ENCODE measurements at regions of chrX and their contacts with region 1.

Region 1: DNA sequence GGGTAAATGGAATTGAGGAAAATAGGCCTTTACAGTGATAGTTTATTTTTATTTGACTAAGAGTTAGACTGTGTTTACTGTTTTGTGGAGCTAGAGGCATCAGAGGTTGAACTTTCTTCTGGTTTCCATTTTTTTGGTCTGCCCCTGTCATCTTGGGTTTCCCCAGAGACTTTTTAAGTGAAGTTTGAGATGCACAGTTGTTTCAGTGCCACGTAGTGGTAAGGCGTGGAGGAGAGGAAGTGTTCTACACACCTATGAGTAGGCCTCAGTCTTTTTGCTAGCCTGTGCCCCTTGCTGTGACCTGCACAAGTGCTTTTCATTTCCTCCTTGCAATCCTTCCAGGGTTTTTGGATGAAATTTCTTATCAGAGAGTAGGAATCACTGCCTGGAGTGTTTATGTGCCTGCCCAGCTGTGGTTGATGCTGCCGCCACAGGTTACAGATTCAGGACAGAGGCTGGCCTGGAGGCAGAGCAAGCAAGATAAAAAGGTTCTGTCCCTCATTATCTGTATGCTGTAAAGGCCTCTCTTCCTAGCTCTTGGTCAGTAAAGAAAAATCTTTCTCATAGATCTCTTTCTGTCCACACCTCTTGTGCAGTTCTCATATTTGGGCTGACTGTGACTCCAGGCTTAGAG is 12.5 kb upstream of the HSFX4 start:
- DNase-seq: no peak
- ATAC-seq: peak; percentile 60
- H3K4me3 Mint-ChIP-seq: no peak overlapping the region
- H3K27ac Mint-ChIP-seq: no peak overlapping the region
- H3K4me1 Mint-ChIP-seq: peaks cover 8% of the 10 kb centered on the region
- H3K27me3 Mint-ChIP-seq: no peaks in the 10 kb centered on the region

Region 2: DNA sequence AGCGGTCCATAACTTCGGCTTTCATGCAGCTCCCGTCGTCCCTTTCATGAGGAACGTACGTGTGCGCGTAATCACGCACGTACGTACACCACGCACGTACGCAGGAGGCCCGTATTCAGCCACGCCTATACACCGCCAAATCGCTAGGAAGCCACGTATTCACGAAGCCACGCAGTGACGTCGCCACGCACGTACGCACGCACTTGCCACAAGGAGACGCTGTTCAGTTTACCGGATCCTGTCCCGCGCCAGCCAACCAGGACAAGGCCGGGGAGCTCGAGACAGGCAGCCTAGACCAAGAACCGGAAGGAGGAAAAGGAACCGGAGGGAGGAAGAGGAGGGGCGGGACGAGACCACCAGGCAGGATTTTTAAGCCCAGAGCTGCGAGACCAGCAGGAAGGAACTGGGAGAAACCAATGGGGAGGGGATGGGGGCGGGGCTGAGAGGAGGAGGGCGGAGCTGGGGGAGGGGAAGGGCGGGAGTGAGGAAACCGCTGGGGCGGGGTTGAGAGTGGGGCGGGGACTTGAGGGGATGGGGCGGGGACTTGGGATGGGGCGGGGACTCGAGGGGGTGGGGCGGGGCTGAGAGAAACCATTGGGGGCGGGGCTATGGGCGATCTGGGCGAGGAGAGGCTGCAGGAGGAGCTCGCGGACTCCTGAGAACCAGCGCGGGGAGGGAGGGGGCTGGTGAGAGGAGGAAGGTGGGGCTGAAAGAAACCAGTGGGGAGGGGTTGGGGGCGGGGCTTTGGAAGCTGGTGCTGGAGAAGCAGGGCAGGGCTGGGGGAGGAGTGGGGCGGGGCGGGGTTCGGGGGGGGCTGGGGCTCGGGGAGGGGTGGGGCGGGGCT is 21.8 kb after region 1 on chrX and contains the start of gene EOLA2:
- CTCF ChIA-PET with region 1: interaction called, 7 read pairs
- POLR2A ChIA-PET with region 1: interaction called, 14 read pairs
- DNase-seq: peak; percentile 95
- ATAC-seq: peak; percentile 54
- H3K4me3 Mint-ChIP-seq: peak within 1 kb of the TSS; percentile 82
- H3K27ac Mint-ChIP-seq: peak within 1 kb of the TSS; percentile 99
- H3K4me1 Mint-ChIP-seq: peaks cover 11% of the 10 kb centered on the region
- H3K27me3 Mint-ChIP-seq: no peaks in the 10 kb centered on the region
- total RNA-seq, gene EOLA2: 22.0 to 23.1 TPM

Measured in activated CD8-positive, alpha-beta T cell treated with anti-CD3 and anti-CD28 coated beads, Interleukin-2, amount 10 ng/mL, durations not matched to agents 7 days and 5 days (primary cell).